ENCODE measurements at regions of chr1 and their contacts with region 1.

Region 1: GRCh38 chr1:169138866-169139670 is 32.6 kb downstream of the ATP1B1 start:
- DNase-seq: no peak
- H3K4me3 Mint-ChIP-seq: no peak overlapping the region
- H3K27ac Mint-ChIP-seq: peak overlapping the region; percentile 50
- H3K4me1 Mint-ChIP-seq: peaks cover 6% of the 10 kb centered on the region
- H3K27me3 Mint-ChIP-seq: no peaks in the 10 kb centered on the region

Region 2: GRCh38 chr1:168535536-168535935 is 603.5 kb before region 1 on chr1:
- CTCF ChIA-PET with region 1: no interaction called
- intact Hi-C with region 1: loop called (anchors 1 kb)
- DNase-seq: peak; percentile 35
- H3K4me3 Mint-ChIP-seq: no peak overlapping the region
- H3K27ac Mint-ChIP-seq: no peak overlapping the region
- H3K4me1 Mint-ChIP-seq: peaks cover 60% of the 10 kb centered on the region
- H3K27me3 Mint-ChIP-seq: no peaks in the 10 kb centered on the region

Region 3: GRCh38 chr1:168628807-168629206 is 510.3 kb before region 1 on chr1:
- CTCF ChIA-PET with region 1: no interaction called
- intact Hi-C with region 1: loop called (anchors 2 kb)
- DNase-seq: peak; percentile 29
- H3K4me3 Mint-ChIP-seq: no peak overlapping the region
- H3K27ac Mint-ChIP-seq: no peak overlapping the region
- H3K4me1 Mint-ChIP-seq: peaks cover 8% of the 10 kb centered on the region
- H3K27me3 Mint-ChIP-seq: peaks cover 10% of the 10 kb centered on the region

Region 4: DNA sequence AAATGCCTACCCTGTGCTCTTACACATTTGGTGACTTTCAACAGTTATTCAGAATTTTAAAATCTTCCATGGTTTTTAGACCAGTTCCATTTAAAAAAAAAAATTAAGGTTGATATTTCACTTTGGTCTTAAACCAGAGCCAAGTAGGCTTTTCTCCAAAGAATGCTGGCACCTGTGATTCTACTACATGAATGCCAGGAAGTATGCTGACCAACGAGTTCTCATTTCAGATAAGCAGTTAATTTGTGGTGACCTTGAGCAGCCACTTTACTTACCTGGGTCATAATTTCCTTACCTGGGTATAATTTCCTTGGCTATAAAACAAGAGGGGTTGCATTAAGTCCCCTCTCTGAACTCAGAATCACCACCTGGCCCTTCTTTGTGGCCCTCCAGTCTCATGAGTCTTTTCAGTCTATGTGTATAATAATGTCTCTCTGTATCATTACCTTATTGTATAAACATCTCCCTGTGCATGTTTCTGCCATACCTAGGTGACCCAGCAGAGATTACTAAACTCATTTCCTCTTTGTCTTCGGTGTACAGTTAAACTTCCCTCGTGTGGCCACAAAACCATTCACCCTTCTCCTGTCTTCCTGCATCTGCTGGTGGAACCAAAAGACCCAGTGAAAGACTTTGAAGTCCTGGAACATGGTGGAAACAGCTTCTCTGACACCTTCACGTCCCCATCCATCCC is 271.0 kb before region 1 on chr1:
- CTCF ChIA-PET with region 1: no interaction called
- intact Hi-C with region 1: no loop called
- DNase-seq: no peak
- H3K4me3 Mint-ChIP-seq: no peak overlapping the region
- H3K27ac Mint-ChIP-seq: no peak overlapping the region
- H3K4me1 Mint-ChIP-seq: no peaks in the 10 kb centered on the region
- H3K27me3 Mint-ChIP-seq: no peaks in the 10 kb centered on the region

Region 5: GRCh38 chr1:168991667-168992475 is 147.2 kb before region 1 on chr1:
- CTCF ChIA-PET with region 1: no interaction called
- intact Hi-C with region 1: loop called (anchors 1 kb)
- DNase-seq: peak; percentile 64
- H3K4me3 Mint-ChIP-seq: no peak overlapping the region
- H3K27ac Mint-ChIP-seq: peak overlapping the region; percentile 89
- H3K4me1 Mint-ChIP-seq: peaks cover 23% of the 10 kb centered on the region
- H3K27me3 Mint-ChIP-seq: peaks cover 3% of the 10 kb centered on the region

Region 6: GRCh38 chr1:169100208-169100607 is 38.9 kb before region 1 on chr1:
- CTCF ChIA-PET with region 1: no interaction called
- intact Hi-C with region 1: no loop called
- DNase-seq: no peak
- H3K4me3 Mint-ChIP-seq: no peak overlapping the region
- H3K27ac Mint-ChIP-seq: no peak overlapping the region
- H3K4me1 Mint-ChIP-seq: peaks cover 5% of the 10 kb centered on the region
- H3K27me3 Mint-ChIP-seq: peaks cover 7% of the 10 kb centered on the region

Region 7: DNA sequence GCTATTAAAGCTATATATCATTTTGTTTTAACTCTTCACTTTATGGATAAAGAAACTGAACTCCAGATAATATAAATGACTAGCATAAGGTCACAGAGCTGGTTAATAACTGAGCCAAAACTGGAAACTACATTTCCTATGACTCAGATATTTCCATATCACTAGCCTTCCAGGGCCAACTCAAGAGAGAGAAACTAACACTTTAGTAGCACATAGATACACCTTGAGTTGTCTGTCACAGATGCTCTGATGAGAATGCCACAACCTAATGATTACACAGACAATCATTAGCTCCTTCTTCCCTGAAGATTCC is 187.8 kb after region 1 on chr1:
- CTCF ChIA-PET with region 1: no interaction called
- intact Hi-C with region 1: loop called (anchors 5 kb)
- DNase-seq: no peak
- H3K4me3 Mint-ChIP-seq: no peak overlapping the region
- H3K27ac Mint-ChIP-seq: no peak overlapping the region
- H3K4me1 Mint-ChIP-seq: peaks cover 18% of the 10 kb centered on the region
- H3K27me3 Mint-ChIP-seq: no peaks in the 10 kb centered on the region

Region 8: DNA sequence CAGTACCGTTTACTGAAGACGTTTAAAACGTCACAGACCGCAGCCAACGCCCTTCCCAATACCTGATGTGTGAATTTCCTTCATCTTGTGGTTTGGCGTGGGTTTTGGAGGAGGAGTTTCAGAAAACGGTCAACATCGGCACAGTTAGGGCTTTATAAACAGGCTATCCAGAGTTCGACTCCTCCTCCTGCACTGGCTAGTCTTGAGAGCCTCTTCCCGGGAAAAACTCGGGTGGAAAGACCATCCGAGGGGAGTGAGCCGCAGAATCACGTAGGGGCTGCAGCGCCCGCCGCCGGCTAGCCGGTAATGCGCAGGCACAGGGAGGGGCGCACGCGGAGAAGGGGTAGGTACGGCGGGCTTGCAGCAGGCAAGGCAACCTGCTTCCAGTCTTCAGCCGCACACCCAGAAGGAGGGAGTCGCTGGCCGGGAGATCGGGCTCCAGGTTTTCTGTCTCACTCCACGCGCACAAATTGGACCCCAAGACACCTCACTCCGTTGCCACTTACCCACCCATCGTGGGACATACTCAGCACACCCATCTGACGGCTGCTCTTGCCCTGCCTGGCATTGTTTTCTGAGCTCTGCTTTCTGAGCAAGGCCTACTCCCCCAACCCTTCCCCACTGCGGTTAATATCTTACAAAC is 321.2 kb after region 1 on chr1:
- CTCF ChIA-PET with region 1: no interaction called
- intact Hi-C with region 1: loop called (anchors 1 kb)
- DNase-seq: peak; percentile 24
- H3K4me3 Mint-ChIP-seq: peak overlapping the region; percentile 49
- H3K27ac Mint-ChIP-seq: no peak overlapping the region
- H3K4me1 Mint-ChIP-seq: peaks cover 25% of the 10 kb centered on the region
- H3K27me3 Mint-ChIP-seq: peaks cover 11% of the 10 kb centered on the region